GM10248 (cell line): ENCODE measurements at regions of chr5 and their contacts with region 1.

Region 1: DNA sequence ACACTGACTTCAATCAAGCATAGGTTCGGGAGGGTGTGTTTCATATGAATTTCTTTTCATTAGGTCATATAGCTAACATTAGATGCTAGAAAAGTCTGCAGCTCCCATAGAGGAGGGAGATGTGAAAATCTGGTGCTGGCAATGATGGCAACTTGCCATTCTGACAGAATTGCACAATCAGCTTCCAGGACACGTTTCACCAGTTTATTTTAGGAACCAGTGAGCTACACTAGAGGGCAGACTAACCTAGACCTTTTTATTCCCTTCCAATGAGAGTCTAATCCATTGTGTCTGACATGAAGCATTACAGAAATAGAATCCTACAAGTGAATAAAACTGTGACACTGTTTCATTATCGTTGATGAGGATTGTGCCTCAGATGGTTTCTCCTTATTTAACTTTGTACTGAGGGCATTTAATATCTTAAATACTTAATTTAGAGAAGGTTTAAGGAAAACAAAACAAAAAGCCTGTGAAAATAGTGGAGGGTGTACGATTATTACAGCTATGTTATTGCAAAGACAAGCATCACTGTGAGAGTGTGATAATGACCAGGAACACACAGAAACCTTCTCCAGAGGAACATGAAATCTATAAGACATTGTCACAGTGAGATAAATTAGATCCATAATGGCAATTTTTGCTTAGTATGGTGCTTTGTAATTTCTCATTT is 363.3 kb upstream of the RPS23 start:
- DNase-seq: peak; percentile 45
- CTCF ChIP-seq: peak; percentile 56

Region 2: GRCh38 chr5:82657033-82657699 is 15.7 kb after region 1 on chr5:
- CTCF ChIA-PET with region 1: interaction called, 19 read pairs
- POLR2A ChIA-PET with region 1: no interaction called
- DNase-seq: no peak
- CTCF ChIP-seq: no peak

Region 3: GRCh38 chr5:83430130-83431010 is 788.9 kb after region 1 on chr5:
- CTCF ChIA-PET with region 1: interaction called, 19 read pairs
- POLR2A ChIA-PET with region 1: no interaction called
- DNase-seq: peak; percentile 44
- CTCF ChIP-seq: peak; percentile 61